Activated CD4-positive, alpha-beta T cell treated with anti-CD3 and anti-CD28 coated beads for 36 hours (primary cell): ENCODE measurements at regions of chr1 and their contacts with region 1.

Region 1: DNA sequence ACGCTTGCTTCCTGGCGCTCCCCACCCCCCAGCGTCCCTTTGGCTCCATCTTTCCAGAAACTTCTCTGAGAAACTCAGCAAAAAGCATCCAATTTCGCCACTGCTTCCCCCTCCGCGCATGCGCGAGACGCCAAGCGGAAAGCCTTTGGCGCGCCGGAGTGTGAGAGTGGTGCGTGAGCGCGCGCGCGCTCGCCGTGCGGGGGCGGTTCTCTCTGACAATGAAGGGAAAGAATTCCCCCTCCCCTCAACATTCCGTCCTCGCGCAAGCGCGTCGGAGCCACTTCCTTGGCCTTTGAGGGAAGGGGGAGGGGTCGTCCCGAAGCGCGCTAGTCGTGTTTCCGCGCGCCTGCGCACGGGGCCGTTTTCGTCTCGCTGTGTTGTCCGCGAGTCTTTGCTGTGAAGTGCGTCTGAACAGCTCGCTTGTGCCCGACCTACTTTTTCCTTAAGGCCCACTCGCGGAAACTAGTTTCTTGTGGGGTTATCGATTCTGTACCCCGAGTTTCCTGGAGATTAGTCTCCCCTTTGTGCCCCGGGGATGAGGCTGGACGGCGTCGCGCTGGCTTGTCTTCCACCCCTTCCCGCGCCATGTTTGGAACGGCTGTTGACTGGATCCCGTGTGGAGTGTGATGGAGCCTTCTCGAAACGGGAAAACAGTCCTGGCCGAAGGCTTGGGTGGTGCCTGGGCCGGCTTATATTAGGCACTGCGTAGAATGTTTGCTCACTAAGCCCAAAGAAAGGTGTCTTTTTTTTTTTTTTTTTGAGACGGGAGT is 11.6 kb upstream of the SPEN start:
- DNase-seq: peak; percentile 100
- ATAC-seq: peak; percentile 59
- H3K4me3 Mint-ChIP-seq: peak overlapping the region; percentile 90
- H3K27ac Mint-ChIP-seq: peak overlapping the region; percentile 98
- H3K4me1 Mint-ChIP-seq: peaks cover 22% of the 10 kb centered on the region
- H3K27me3 Mint-ChIP-seq: no peaks in the 10 kb centered on the region

Region 2: DNA sequence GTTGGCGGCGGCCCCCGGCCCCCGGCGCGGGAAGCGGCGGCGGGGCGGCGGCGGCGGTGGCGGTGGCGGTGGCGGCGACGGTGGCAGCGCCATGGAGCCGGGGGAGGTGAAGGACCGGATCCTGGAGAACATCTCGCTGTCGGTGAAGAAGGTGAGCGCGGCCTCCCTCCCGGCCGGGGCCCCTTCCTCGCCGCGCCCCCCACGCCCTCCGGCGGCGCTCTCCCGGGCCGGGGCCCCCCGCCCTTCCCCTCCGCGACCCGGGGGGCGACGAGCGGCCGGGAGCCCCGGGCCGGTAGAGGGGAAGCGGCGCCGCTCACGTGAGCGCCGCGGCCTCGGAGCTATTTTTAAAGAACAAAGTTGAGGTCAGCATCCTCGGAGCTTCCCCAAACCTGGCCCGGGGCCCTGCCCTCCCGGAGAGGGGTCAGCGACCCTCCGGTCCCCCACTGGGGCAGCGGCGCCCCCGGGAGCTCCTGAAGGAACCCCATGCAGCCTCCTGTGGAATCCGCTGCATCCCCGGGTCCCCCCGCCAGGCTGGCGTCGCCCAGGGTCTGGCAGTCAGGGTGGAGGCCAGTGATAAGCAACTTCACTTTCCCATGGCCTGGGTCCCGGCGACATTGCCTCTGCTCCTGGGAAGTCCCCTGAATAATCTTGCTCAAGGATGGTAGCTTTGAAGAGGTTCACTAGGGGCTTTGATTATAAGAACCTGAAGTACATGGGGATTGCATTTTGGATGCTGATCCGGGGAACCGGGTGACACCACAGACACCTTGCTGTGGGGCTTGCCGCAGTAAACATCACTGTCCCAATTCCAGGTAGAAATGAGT is 151.2 kb before region 1 on chr1:
- CTCF ChIA-PET with region 1: interaction called, 3 read pairs
- POLR2A ChIA-PET with region 1: no interaction called
- intact Hi-C with region 1: loop called in 1 of 2 experiments (anchors 5 kb)
- DNase-seq: peak; percentile 60
- ATAC-seq: peak; percentile 37
- H3K4me3 Mint-ChIP-seq: peak overlapping the region; percentile 86
- H3K27ac Mint-ChIP-seq: peak overlapping the region; percentile 92
- H3K4me1 Mint-ChIP-seq: peaks cover 53% of the 10 kb centered on the region
- H3K27me3 Mint-ChIP-seq: no peaks in the 10 kb centered on the region

Region 3: GRCh38 chr1:15804060-15804459 is 31.9 kb before region 1 on chr1:
- CTCF ChIA-PET with region 1: no interaction called
- POLR2A ChIA-PET with region 1: no interaction called
- intact Hi-C with region 1: no loop called
- DNase-seq: no peak
- ATAC-seq: no peak
- H3K4me3 Mint-ChIP-seq: no peak overlapping the region
- H3K27ac Mint-ChIP-seq: no peak overlapping the region
- H3K4me1 Mint-ChIP-seq: no peaks in the 10 kb centered on the region
- H3K27me3 Mint-ChIP-seq: no peaks in the 10 kb centered on the region

Region 4: DNA sequence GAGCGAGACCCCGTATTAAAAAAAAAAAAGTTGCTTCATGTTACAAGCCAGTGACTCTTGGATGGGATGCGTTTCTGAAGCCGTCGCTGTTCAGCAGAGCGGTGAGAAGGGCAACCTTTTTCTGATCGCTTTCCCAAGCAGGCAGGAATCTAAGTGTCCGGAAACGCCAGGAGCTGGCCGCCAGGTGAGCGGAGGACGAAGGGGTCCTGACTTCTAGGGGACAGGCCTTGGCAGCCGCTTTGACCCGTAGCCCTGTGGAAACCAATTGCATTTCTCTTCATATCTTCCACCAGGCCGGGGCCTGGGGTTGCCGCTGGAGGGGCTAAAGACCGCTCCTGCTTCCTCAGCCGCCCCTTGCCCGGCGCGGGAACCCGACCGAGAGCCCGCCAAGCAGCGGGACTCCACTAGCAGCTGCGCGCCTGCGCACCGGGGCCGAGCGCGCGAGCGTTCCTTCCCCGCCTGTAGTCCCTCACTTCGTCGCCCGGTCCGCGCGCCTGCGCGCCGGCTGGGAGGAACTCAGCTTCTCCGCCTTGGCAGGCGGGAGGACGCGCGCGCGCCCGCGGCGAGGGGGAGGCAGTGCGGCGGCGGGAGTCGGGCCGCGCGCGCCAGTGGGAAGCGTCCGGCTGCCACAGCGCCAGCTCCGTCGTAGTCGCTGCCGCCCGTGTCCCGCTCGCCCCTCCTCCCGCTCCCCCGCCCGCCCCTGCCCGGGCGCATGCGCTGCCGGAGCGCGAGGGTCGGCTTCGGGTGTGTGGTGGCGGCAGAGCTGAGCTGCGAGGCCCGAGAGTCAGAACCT is 11.4 kb after region 1 on chr1 and contains the start of gene SPEN:
- CTCF ChIA-PET with region 1: interaction called, 10 read pairs
- POLR2A ChIA-PET with region 1: interaction called, 71 read pairs
- intact Hi-C with region 1: loop called (anchors 1 kb)
- DNase-seq: peak; percentile 99
- ATAC-seq: peak; percentile 88
- H3K4me3 Mint-ChIP-seq: peak within 1 kb of the TSS; percentile 91
- H3K27ac Mint-ChIP-seq: peak within 1 kb of the TSS; percentile 94
- H3K4me1 Mint-ChIP-seq: peaks cover 47% of the 10 kb centered on the region
- H3K27me3 Mint-ChIP-seq: no peaks in the 10 kb centered on the region
- total RNA-seq, gene SPEN: 43.2 to 52.7 TPM

Region 5: GRCh38 chr1:15949453-15950245 is 113.7 kb after region 1 on chr1:
- CTCF ChIA-PET with region 1: interaction called, 6 read pairs
- POLR2A ChIA-PET with region 1: interaction called, 8 read pairs
- intact Hi-C with region 1: loop called in 1 of 2 experiments (anchors 1 kb)
- DNase-seq: peak; percentile 94
- ATAC-seq: peak; percentile 75
- H3K4me3 Mint-ChIP-seq: peak overlapping the region; percentile 61
- H3K27ac Mint-ChIP-seq: peak overlapping the region; percentile 95
- H3K4me1 Mint-ChIP-seq: peaks cover 74% of the 10 kb centered on the region
- H3K27me3 Mint-ChIP-seq: no peaks in the 10 kb centered on the region

Region 6: GRCh38 chr1:15975805-15976680 is 140.1 kb after region 1 on chr1 and contains the start of gene ZBTB17:
- CTCF ChIA-PET with region 1: no interaction called
- POLR2A ChIA-PET with region 1: interaction called, 8 read pairs
- intact Hi-C with region 1: loop called in 1 of 2 experiments (anchors 1 kb)
- DNase-seq: peak; percentile 98
- ATAC-seq: peak; percentile 89
- H3K4me3 Mint-ChIP-seq: peak within 1 kb of the TSS; percentile 85
- H3K27ac Mint-ChIP-seq: peak within 1 kb of the TSS; percentile 93
- H3K4me1 Mint-ChIP-seq: peaks cover 42% of the 10 kb centered on the region
- H3K27me3 Mint-ChIP-seq: no peaks in the 10 kb centered on the region
- total RNA-seq, gene ZBTB17: 47.7 to 48.3 TPM

Region 7: DNA sequence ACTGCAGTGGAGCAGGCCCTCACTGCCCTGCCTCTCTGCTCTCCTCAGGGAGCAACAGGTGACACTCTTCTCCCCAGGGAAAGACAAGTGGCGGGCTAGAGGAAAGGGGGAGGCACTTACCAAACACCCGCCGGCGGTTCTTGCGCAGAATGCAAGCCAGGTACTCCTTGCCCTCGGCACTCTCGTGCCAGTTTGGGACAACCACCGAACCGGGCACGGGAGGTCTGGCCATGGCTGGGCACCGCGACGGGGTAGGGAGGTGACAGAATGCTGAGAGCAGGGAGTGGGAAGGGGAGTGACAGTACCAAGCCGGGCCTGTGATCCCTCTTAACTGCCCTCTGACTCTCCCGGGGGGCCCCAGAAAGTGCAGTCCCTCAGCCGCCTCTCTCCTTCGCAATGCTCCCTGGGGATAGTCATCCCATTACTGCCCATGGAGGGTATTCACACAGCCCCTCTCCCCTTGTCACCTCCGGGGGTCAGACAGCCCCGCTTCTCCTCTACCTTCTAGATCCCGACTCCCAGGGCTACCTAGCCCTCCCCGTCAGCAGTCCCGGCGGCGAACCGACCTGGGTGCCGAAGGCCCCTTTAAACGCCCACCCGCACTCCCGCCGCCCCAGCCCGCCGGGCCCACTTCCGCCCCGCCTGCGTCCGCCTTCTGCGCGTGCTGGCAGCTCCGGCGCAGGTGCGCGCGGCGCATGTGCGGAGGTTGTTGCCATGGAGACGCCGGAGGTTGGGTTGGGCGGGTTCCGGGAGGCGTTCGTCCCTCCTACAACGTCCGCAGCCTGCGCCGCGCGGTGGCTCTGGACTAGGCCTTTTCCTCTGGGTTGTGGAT is 400.8 kb after region 1 on chr1 and contains the start of gene CPLANE2:
- CTCF ChIA-PET with region 1: no interaction called
- POLR2A ChIA-PET with region 1: no interaction called
- intact Hi-C with region 1: loop called in 1 of 2 experiments (anchors 1 kb)
- DNase-seq: peak; percentile 98
- ATAC-seq: peak; percentile 85
- H3K4me3 Mint-ChIP-seq: peak within 1 kb of the TSS; percentile 81
- H3K27ac Mint-ChIP-seq: peak within 1 kb of the TSS; percentile 85
- H3K4me1 Mint-ChIP-seq: peaks cover 23% of the 10 kb centered on the region
- H3K27me3 Mint-ChIP-seq: no peaks in the 10 kb centered on the region
- total RNA-seq, gene CPLANE2: 2.4 to 3.7 TPM